Activated T-helper 1 cell treated with anti-CD3 and anti-CD28 coated beads, Interleukin-12 subunit alpha, Interleukin-12 subunit beta, Interleukin-2, Interleukin-4 antibody, amounts not matched to agents 30 ng/mL and 10 ng/mL and 1 ng/mL, durations not matched to agents 14 hours and 24 hours and 36 hours (primary cell): ENCODE measurements at regions of chr15 and their contacts with region 1.

Region 1: GRCh38 chr15:38002883-38003477 is 68.5 kb downstream of the TMCO5A start:
- DNase-seq: peak; percentile 10
- H3K4me3 Mint-ChIP-seq: no peak overlapping the region
- H3K27ac Mint-ChIP-seq: no peak overlapping the region
- H3K4me1 Mint-ChIP-seq: no peaks in the 10 kb centered on the region
- H3K27me3 Mint-ChIP-seq: peaks cover 7% of the 10 kb centered on the region

Region 2: DNA sequence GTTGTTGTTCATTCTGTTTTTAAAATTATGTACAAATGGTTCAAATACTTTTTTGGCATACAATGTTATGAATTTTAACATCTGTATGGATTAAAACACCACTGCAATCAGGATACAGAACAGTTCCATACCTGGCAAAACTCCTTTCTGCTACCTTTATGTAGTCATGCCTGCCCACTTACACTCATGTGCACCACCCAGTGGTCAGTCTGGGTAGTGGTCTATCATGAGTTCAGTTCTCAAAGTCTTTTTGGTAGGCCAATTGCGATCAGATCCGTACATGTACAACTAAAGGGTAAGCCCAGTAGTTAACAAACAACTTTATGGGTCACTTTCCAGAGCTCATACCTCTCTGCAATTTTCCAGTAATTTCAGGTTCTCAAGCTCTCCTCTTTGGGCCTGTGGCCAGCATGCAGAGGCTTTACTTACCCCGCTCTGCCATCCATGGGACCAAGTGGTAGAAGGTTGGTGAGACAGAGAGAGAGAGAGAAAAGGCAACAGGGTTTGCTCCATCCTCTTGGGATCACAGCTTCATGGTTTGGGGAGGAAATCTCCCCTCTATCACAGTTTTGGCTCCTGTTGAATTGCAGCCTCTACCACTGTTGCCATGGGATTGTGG is 387.1 kb after region 1 on chr15:
- intact Hi-C with region 1: loop called (anchors 2 kb)
- DNase-seq: peak; percentile 32
- H3K4me3 Mint-ChIP-seq: no peak overlapping the region
- H3K27ac Mint-ChIP-seq: no peak overlapping the region
- H3K4me1 Mint-ChIP-seq: no peaks in the 10 kb centered on the region
- H3K27me3 Mint-ChIP-seq: peaks cover 24% of the 10 kb centered on the region